Transverse colon (tissue), 4 donors: ENCODE measurements at regions of chr22 and their contacts with region 1.

Region 1: DNA sequence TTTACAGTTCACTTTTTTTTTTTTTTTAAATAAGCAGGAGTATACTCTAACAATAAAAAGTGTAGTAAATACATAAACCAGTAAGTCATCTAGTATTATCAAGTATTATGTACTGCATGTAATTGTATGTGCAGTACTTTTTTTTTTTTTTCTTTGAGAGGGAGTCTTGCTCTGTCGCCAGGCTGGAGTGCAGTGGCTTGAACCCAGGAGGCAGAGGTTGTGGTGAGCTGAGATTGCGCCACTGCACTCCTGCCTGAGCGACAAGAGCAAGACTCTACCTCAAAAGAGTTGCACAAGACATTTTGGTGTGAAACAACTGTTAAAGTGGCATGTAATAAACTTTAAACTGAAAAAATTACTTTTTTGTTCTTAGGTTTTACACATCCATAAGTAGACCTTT is 16.7 kb downstream of the BCL2L13 start:
- DNase-seq: peak; percentile 37
- H3K4me3 ChIP-seq: no peak overlapping the region
- H3K27ac ChIP-seq: peak overlapping the region; percentile 69 to 78 (median 74)
- H3K4me1 ChIP-seq: peaks cover 0 to 27% (median 11%) of the 10 kb centered on the region in 4 donors
- H3K27me3 ChIP-seq: no peaks in the 10 kb centered on the region
- CTCF ChIP-seq: no peak
- EP300 ChIP-seq: no peak
- POLR2A ChIP-seq: no peak

Region 2: GRCh38 chr22:17678872-17679271 is 23.6 kb after region 1 on chr22:
- in situ Hi-C with region 1: no loop called
- intact Hi-C with region 1: loop called (anchors 2 kb)
- DNase-seq: no peak
- H3K4me3 ChIP-seq: no peak overlapping the region
- H3K27ac ChIP-seq: no peak overlapping the region
- H3K4me1 ChIP-seq: no peaks in the 10 kb centered on the region
- H3K27me3 ChIP-seq: no peaks in the 10 kb centered on the region
- CTCF ChIP-seq: no peak
- EP300 ChIP-seq: no peak
- POLR2A ChIP-seq: no peak